Activated naive CD8-positive, alpha-beta T cell treated with anti-CD3 and anti-CD28 coated beads, Interleukin-2, amount 10 ng/mL, durations not matched to agents 7 days and 5 days (primary cell): ENCODE measurements at regions of chr16 and their contacts with region 1.

Region 1: GRCh38 chr16:31073968-31074813 is at the starts of genes ZNF646 and ZNF668:
- DNase-seq: peak; percentile 94
- ATAC-seq: peak; percentile 78
- H3K4me3 Mint-ChIP-seq: peak within 1 kb of the TSS; percentile 97
- H3K27ac Mint-ChIP-seq: peak within 1 kb of the TSS; percentile 99
- H3K4me1 Mint-ChIP-seq: peaks cover 28% of the 10 kb centered on the region
- H3K27me3 Mint-ChIP-seq: no peaks in the 10 kb centered on the region
- total RNA-seq, gene ZNF646: 37.3 to 38.7 TPM
- total RNA-seq, gene ZNF668: 17.9 to 20.5 TPM

Region 2: DNA sequence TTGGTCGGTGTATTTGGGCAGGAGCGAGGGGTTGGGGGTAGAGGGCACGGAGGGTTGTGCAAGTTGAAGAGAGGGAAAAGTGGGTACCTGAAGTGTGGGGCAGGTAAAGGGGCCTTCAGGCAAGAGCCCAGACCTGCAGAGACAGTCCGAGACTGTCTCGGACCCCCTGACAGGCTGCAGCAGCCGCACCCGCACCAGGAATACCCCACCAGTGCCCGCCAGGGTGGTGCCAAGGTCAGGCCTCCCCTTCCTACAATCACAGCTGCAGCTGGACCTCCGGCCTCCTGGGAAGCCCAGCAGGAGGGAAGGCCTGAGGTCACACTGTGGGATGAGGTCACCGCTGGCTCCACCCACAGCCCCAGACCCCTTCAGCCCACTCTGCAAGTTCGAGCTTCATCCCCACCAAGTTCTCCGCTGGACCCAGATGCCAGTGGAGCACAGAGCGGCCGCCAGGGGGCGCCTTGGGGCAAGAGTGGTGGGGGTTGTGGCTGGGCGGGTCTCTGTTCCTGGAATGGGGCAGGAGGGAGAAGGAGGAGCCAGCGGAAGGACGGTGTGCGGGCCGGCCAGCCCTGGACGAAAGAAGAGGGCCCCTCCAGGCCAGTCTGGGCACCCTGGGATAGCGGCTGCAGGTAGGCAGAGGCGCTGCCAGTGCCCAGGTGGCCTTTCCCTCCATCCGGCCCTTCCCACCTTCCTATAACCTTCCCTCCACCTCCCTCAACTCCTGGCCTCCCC is 89.4 kb before region 1 on chr16 and contains the start of gene HSD3B7:
- POLR2A ChIA-PET with region 1: interaction called, 11 read pairs
- DNase-seq: peak; percentile 92
- ATAC-seq: peak; percentile 75
- H3K4me3 Mint-ChIP-seq: peak within 1 kb of the TSS; percentile 76
- H3K27ac Mint-ChIP-seq: peak within 1 kb of the TSS; percentile 63
- H3K4me1 Mint-ChIP-seq: peaks cover 7% of the 10 kb centered on the region
- H3K27me3 Mint-ChIP-seq: no peaks in the 10 kb centered on the region
- total RNA-seq, gene HSD3B7: 8.5 to 10.9 TPM

Region 3: DNA sequence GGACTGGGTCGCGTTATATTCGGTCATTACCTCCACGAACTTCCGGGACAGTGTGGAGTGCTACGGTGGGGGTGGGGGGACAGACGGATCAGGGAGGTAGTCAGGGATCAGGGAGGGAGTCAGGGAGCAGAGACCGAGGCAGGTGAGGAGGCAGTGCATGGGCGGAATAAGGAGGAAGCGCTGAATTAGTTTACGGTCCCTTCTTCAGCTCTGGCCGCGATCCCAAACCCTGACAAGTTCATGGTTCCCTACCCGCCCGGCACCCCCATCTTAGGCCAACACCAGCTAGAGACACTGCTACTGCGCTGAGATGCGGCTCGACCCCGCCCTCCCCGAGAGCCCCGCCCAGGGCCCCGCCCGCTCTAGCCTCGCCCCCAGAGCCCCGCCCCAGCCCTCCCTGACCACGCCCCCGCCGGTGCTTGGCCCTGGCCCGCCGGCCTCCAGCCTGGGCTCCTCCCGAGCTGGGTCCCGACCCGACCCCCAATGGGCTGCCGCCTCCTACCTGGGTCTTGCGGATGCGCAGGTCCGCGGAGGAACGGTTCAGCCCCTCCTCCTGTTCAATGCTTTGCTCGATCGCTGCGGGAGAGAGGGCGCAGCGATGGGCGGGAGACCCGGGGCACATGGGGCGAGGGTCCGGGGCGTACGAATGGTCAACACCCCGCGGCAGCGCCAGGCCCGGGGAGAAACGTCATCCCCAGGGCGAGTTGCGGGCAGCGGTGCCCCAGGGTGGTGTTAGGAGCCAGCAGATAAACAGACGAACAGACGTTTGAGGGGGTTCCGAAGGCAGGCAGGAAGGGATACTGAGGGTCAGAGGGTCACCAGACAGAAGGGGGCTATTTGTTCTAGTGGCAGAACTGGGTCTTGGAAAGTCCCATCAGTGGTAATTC is 76.9 kb before region 1 on chr16:
- POLR2A ChIA-PET with region 1: interaction called, 19 read pairs
- DNase-seq: peak; percentile 86
- ATAC-seq: peak; percentile 97
- H3K4me3 Mint-ChIP-seq: peak overlapping the region; percentile 98
- H3K27ac Mint-ChIP-seq: peak overlapping the region; percentile 95
- H3K4me1 Mint-ChIP-seq: peaks cover 12% of the 10 kb centered on the region
- H3K27me3 Mint-ChIP-seq: peaks cover 5% of the 10 kb centered on the region

Region 4: GRCh38 chr16:31032736-31033708 is 41.2 kb before region 1 on chr16 and contains the start of gene STX4:
- POLR2A ChIA-PET with region 1: interaction called, 23 read pairs
- DNase-seq: peak; percentile 94
- ATAC-seq: peak; percentile 80
- H3K4me3 Mint-ChIP-seq: peak within 1 kb of the TSS; percentile 99
- H3K27ac Mint-ChIP-seq: peak within 1 kb of the TSS; percentile 97
- H3K4me1 Mint-ChIP-seq: peaks cover 22% of the 10 kb centered on the region
- H3K27me3 Mint-ChIP-seq: no peaks in the 10 kb centered on the region
- total RNA-seq, gene STX4: 82.8 to 84.8 TPM

Region 5: GRCh38 chr16:31094424-31095120 is 20.4 kb after region 1 on chr16 and contains the start of gene VKORC1:
- POLR2A ChIA-PET with region 1: interaction called, 18 read pairs
- DNase-seq: peak; percentile 87
- ATAC-seq: peak; percentile 90
- H3K4me3 Mint-ChIP-seq: peak within 1 kb of the TSS; percentile 99
- H3K27ac Mint-ChIP-seq: peak within 1 kb of the TSS; percentile 95
- H3K4me1 Mint-ChIP-seq: peaks cover 20% of the 10 kb centered on the region
- H3K27me3 Mint-ChIP-seq: peaks cover 2% of the 10 kb centered on the region
- total RNA-seq, gene VKORC1: 79.4 to 80.4 TPM

Region 6: DNA sequence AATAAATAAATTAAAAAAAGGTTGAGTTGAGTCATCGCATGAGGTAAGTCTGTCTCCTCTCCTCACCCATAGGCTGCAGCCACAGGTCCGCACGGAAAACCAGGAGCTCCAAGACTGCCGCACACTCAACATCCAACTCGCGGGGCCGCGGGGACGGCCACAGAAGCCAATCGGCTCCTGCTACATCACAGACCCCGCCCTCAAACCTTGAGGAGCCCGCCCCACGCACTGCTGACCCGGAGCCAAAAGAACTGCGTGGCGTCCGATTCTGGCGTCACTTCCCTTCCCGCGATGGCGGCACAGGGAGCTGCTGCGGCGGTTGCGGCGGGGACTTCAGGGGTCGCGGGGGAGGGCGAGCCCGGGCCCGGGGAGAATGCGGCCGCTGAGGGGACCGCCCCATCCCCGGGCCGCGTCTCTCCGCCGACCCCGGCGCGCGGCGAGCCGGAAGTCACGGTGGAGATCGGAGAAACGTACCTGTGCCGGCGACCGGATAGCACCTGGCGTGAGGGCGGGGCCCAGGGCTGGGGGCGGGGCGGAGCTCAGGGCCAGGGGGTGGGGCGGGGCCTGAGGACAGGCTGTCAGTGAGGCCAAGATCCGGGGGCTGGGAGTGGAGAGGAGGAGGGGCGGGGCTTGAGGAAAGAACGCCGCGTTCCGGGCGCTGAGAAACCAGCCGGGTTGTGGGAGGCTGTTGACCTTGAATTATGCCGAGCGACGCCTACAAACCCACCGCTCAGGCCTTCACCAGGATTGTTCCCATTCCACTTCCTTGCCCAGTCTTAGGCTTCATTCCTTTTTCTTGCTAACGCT is 43.4 kb after region 1 on chr16 and contains the start of gene KAT8:
- POLR2A ChIA-PET with region 1: interaction called, 21 read pairs
- DNase-seq: peak; percentile 95
- ATAC-seq: peak; percentile 94
- H3K4me3 Mint-ChIP-seq: peak within 1 kb of the TSS; percentile 87
- H3K27ac Mint-ChIP-seq: peak within 1 kb of the TSS; percentile 87
- H3K4me1 Mint-ChIP-seq: peaks cover 12% of the 10 kb centered on the region
- H3K27me3 Mint-ChIP-seq: no peaks in the 10 kb centered on the region
- total RNA-seq, gene KAT8: 66.5 to 72.9 TPM

Region 7: GRCh38 chr16:31142109-31143010 is 68.2 kb after region 1 on chr16:
- POLR2A ChIA-PET with region 1: interaction called, 13 read pairs
- DNase-seq: peak; percentile 98
- ATAC-seq: peak; percentile 87
- H3K4me3 Mint-ChIP-seq: peak overlapping the region; percentile 86
- H3K27ac Mint-ChIP-seq: peak overlapping the region; percentile 89
- H3K4me1 Mint-ChIP-seq: peaks cover 5% of the 10 kb centered on the region
- H3K27me3 Mint-ChIP-seq: peaks cover 1% of the 10 kb centered on the region